ENCODE measurements at regions of chr3 and their contacts with region 1.

Region 1: GRCh38 chr3:56484122-56484521 is 15.9 kb upstream of the ERC2 start:
- DNase-seq: no peak
- ATAC-seq: no peak
- H3K4me3 ChIP-seq: no peak overlapping the region
- H3K4me3 Mint-ChIP-seq: no peak overlapping the region
- H3K27ac ChIP-seq: no peak overlapping the region
- H3K27ac Mint-ChIP-seq: no peak overlapping the region
- H3K4me1 ChIP-seq: no peaks in the 10 kb centered on the region
- H3K4me1 Mint-ChIP-seq: no peaks in the 10 kb centered on the region
- H3K27me3 ChIP-seq: no peaks in the 10 kb centered on the region
- H3K27me3 Mint-ChIP-seq: peaks cover 15% of the 10 kb centered on the region
- CTCF ChIP-seq: no peak

Region 2: GRCh38 chr3:56415652-56416051 is 68.5 kb before region 1 on chr3:
- CTCF ChIA-PET with region 1: no interaction called
- POLR2A ChIA-PET with region 1: no interaction called
- intact Hi-C with region 1: no loop called
- DNase-seq: no peak
- ATAC-seq: no peak
- H3K4me3 ChIP-seq: no peak overlapping the region
- H3K4me3 Mint-ChIP-seq: no peak overlapping the region
- H3K27ac ChIP-seq: no peak overlapping the region
- H3K27ac Mint-ChIP-seq: no peak overlapping the region
- H3K4me1 ChIP-seq: no peaks in the 10 kb centered on the region
- H3K4me1 Mint-ChIP-seq: no peaks in the 10 kb centered on the region
- H3K27me3 ChIP-seq: peaks cover 0 to 4% (median 0%) of the 10 kb centered on the region in 4 experiments
- H3K27me3 Mint-ChIP-seq: peaks cover 7% of the 10 kb centered on the region
- CTCF ChIP-seq: no peak

Region 3: DNA sequence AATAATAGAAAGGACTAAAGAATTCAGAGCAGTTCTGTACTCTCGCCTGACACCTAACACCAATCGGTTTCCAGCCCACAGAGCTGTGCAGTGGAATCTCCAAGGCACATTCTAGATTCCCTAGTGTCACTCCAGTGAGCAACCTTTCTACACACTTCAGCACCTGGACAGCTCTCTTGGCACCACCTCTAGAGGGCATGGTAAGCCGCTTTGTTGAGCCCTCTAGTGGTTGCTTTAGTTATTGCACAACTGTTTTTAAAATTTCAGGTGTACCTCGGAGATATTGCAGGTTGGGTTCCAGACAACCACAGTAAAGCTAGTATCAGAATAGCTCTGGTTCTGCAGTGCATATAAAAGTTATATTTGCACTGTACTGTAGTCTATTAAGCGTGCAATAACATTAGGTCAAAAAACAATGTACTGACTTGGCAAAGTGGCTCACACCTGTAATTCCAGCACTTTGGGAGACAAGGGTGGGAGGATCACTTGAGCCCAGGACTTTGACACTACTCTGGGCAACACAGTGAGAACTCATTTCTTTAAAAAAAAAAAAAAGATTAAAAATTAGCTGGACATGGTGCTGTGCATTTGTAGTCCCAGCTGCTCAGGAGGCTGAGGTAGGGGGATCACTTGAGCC is 10.7 kb after region 1 on chr3:
- CTCF ChIA-PET with region 1: interaction called, 11 read pairs
- POLR2A ChIA-PET with region 1: no interaction called
- intact Hi-C with region 1: no loop called
- DNase-seq: peak; percentile 78
- ATAC-seq: peak; percentile 87
- H3K4me3 ChIP-seq: no peak overlapping the region
- H3K4me3 Mint-ChIP-seq: no peak overlapping the region
- H3K27ac ChIP-seq: no peak overlapping the region
- H3K27ac Mint-ChIP-seq: no peak overlapping the region
- H3K4me1 ChIP-seq: no peaks in the 10 kb centered on the region
- H3K4me1 Mint-ChIP-seq: no peaks in the 10 kb centered on the region
- H3K27me3 ChIP-seq: peaks cover 0 to 4% (median 2%) of the 10 kb centered on the region in 4 experiments
- H3K27me3 Mint-ChIP-seq: peaks cover 20% of the 10 kb centered on the region
- CTCF ChIP-seq: peak; percentile 87

Region 4: GRCh38 chr3:56610669-56611335 is 126.7 kb after region 1 on chr3:
- CTCF ChIA-PET with region 1: no interaction called
- POLR2A ChIA-PET with region 1: no interaction called
- intact Hi-C with region 1: no loop called
- DNase-seq: no peak
- ATAC-seq: no peak
- H3K4me3 ChIP-seq: no peak overlapping the region
- H3K4me3 Mint-ChIP-seq: no peak overlapping the region
- H3K27ac ChIP-seq: no peak overlapping the region
- H3K27ac Mint-ChIP-seq: no peak overlapping the region
- H3K4me1 ChIP-seq: no peaks in the 10 kb centered on the region
- H3K4me1 Mint-ChIP-seq: peaks cover 13% of the 10 kb centered on the region
- H3K27me3 ChIP-seq: no peaks in the 10 kb centered on the region
- H3K27me3 Mint-ChIP-seq: no peaks in the 10 kb centered on the region
- CTCF ChIP-seq: no peak

Measured in B cell (primary cell).